ENCODE measurements at regions of chr11 and their contacts with region 1.

Region 1: DNA sequence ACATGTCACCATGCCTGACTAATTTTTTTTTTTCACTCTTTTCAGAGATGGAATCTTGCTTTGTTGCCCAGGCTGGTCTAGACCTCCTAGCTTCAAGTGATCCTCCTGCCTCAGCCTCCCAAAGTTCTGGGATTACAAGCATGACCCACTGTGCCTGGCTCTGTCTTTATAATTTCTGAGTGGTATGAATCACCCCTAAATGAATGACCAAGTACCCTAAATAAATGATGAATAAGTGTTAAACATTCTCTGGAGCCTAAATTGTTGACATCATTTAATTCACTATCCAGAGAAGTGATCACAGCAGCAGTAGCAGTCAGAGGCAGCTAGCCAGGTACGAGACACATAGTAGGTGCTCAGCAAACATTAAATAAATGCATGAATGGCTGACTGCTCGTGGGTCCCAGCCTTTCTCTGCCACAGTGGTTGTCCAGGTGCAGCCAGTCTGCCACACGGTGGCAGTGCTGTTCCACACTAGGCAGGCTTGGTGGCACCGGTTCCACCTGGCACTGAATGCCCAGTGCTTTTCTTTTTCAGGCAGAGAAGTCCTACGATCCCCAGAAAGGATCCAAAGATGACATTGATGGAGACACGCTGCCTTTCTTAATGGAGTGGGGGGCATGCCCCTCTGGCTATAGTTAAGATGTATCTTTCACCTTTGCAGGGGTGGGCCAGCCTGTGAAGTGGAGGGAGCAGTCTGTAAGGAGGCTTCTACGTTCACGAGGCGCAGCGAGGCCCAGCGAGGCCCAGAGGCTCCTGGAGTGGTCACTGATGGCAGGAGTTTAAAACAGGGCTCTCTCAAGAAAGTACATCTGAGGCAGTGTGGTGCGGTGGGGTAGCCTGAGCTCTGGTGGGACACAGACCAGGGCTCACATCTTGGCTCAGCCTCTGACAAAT is 8.7 kb upstream of the TTC12 start:
- DNase-seq: peak; percentile 32
- ATAC-seq: peak; percentile 94
- H3K4me3 ChIP-seq: no peak overlapping the region
- H3K27ac ChIP-seq: no peak overlapping the region
- H3K4me1 ChIP-seq: no peaks in the 10 kb centered on the region
- H3K27me3 ChIP-seq: no peaks in the 10 kb centered on the region
- CTCF ChIP-seq: peak; percentile 97
- EP300 ChIP-seq: no peak
- POLR2A ChIP-seq: no peak
- RAD21 ChIP-seq: peak; percentile 87

Region 2: GRCh38 chr11:113532697-113533424 is 227.2 kb after region 1 on chr11:
- CTCF ChIA-PET with region 1: interaction called, 69 read pairs
- POLR2A ChIA-PET with region 1: no interaction called
- in situ Hi-C with region 1: loop called (anchors 5 kb)
- intact Hi-C with region 1: loop called (anchors 1 kb)
- DNase-seq: peak; percentile 46
- ATAC-seq: peak; percentile 91
- H3K4me3 ChIP-seq: no peak overlapping the region
- H3K27ac ChIP-seq: no peak overlapping the region
- H3K4me1 ChIP-seq: no peaks in the 10 kb centered on the region
- H3K27me3 ChIP-seq: peaks cover 0 to 14% of the 10 kb centered on the region in 2 experiments; a peak in 2 of 5 replicates
- CTCF ChIP-seq: peak; percentile 78
- EP300 ChIP-seq: no peak
- POLR2A ChIP-seq: no peak
- RAD21 ChIP-seq: peak; percentile 43; the same call in 1 of the 2 replicates

Region 3: GRCh38 chr11:113796663-113797259 is 491.1 kb after region 1 on chr11:
- CTCF ChIA-PET with region 1: interaction called, 6 read pairs
- POLR2A ChIA-PET with region 1: no interaction called
- in situ Hi-C with region 1: no loop called
- intact Hi-C with region 1: loop called (anchors 1 kb)
- DNase-seq: peak; percentile 39
- ATAC-seq: peak; percentile 98
- H3K4me3 ChIP-seq: no peak overlapping the region
- H3K27ac ChIP-seq: no peak overlapping the region
- H3K4me1 ChIP-seq: no peaks in the 10 kb centered on the region
- H3K27me3 ChIP-seq: no peaks in the 10 kb centered on the region; a peak in 1 of 5 replicates
- CTCF ChIP-seq: peak; percentile 66
- EP300 ChIP-seq: no peak
- POLR2A ChIP-seq: no peak
- RAD21 ChIP-seq: no peak